ENCODE measurements at regions of chr2 and their contacts with region 1.

Region 1: DNA sequence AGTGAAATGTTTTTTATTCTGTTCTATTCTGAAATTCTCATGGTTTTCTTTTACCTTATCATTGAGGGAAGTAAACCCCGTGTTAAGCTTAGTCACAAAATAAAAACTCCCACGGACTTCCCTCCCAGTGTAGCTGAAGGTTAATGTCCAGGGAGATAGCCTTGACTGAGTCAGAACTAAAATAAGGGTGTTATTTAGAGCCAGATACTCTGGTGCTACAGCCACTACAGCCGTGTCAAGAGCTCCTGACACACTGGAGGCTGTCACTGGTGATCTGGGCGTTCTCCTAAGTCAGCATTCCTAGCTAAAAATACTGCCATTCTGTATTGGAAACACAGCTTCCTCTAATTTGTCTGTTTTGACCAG is 82.0 kb upstream of the RANBP2 start:
- DNase-seq: no peak
- H3K4me3 ChIP-seq: no peak overlapping the region
- H3K4me3 Mint-ChIP-seq: no peak overlapping the region
- H3K27ac ChIP-seq: no peak overlapping the region
- H3K27ac Mint-ChIP-seq: peak overlapping the region in 1 of 8 donors; percentile 47
- H3K4me1 ChIP-seq: peaks cover 9% of the 10 kb centered on the region
- H3K4me1 Mint-ChIP-seq: peaks cover 33 to 68% (median 58%) of the 10 kb centered on the region in 3 donors
- H3K27me3 ChIP-seq: no peaks in the 10 kb centered on the region
- H3K27me3 Mint-ChIP-seq: peaks cover 0 to 2% of the 10 kb centered on the region in 2 donors

Region 2: GRCh38 chr2:108583903-108584520 is 53.3 kb before region 1 on chr2:
- CTCF ChIA-PET with region 1: interaction called, 10 read pairs
- POLR2A ChIA-PET with region 1: no interaction called
- DNase-seq: peak; percentile 24 to 65 (median 32)
- H3K4me3 ChIP-seq: no peak overlapping the region
- H3K4me3 Mint-ChIP-seq: no peak overlapping the region
- H3K27ac ChIP-seq: no peak overlapping the region
- H3K27ac Mint-ChIP-seq: peak overlapping the region in 3 of 8 donors; percentile 43 to 66 (median 52)
- H3K4me1 ChIP-seq: no peaks in the 10 kb centered on the region
- H3K4me1 Mint-ChIP-seq: peaks cover 18 to 33% (median 21%) of the 10 kb centered on the region in 3 donors
- H3K27me3 ChIP-seq: no peaks in the 10 kb centered on the region
- H3K27me3 Mint-ChIP-seq: peaks cover 0 to 1% of the 10 kb centered on the region in 2 donors

Region 3: GRCh38 chr2:108594132-108594981 is 42.9 kb before region 1 on chr2:
- CTCF ChIA-PET with region 1: interaction called, 15 read pairs
- POLR2A ChIA-PET with region 1: no interaction called
- DNase-seq: no peak
- H3K4me3 ChIP-seq: no peak overlapping the region
- H3K4me3 Mint-ChIP-seq: no peak overlapping the region
- H3K27ac ChIP-seq: peak overlapping the region; percentile 25
- H3K27ac Mint-ChIP-seq: peak overlapping the region in 4 of 8 donors; percentile 18 to 62 (median 36)
- H3K4me1 ChIP-seq: peaks cover 12% of the 10 kb centered on the region
- H3K4me1 Mint-ChIP-seq: peaks cover 17 to 24% (median 22%) of the 10 kb centered on the region in 3 donors
- H3K27me3 ChIP-seq: no peaks in the 10 kb centered on the region
- H3K27me3 Mint-ChIP-seq: no peaks in the 10 kb centered on the region

Region 4: GRCh38 chr2:108607706-108608301 is 29.5 kb before region 1 on chr2:
- CTCF ChIA-PET with region 1: interaction called, 164 read pairs
- POLR2A ChIA-PET with region 1: interaction called, 3 read pairs
- DNase-seq: peak in 3 of 5 donors; percentile 26 to 74 (median 38)
- H3K4me3 ChIP-seq: no peak overlapping the region
- H3K4me3 Mint-ChIP-seq: no peak overlapping the region
- H3K27ac ChIP-seq: no peak overlapping the region
- H3K27ac Mint-ChIP-seq: no peak overlapping the region
- H3K4me1 ChIP-seq: peaks cover 23% of the 10 kb centered on the region
- H3K4me1 Mint-ChIP-seq: peaks cover 51 to 54% (median 54%) of the 10 kb centered on the region in 3 donors
- H3K27me3 ChIP-seq: no peaks in the 10 kb centered on the region
- H3K27me3 Mint-ChIP-seq: no peaks in the 10 kb centered on the region

Region 5: GRCh38 chr2:108621087-108621559 is 16.2 kb before region 1 on chr2:
- CTCF ChIA-PET with region 1: interaction called, 164 read pairs
- POLR2A ChIA-PET with region 1: interaction called, 5 read pairs
- DNase-seq: peak; percentile 40 to 88 (median 72)
- H3K4me3 ChIP-seq: peak overlapping the region; percentile 35
- H3K4me3 Mint-ChIP-seq: peak overlapping the region; percentile 88 to 91 (median 89)
- H3K27ac ChIP-seq: peak overlapping the region; percentile 41
- H3K27ac Mint-ChIP-seq: peak overlapping the region; percentile 85 to 97 (median 94)
- H3K4me1 ChIP-seq: peaks cover 73% of the 10 kb centered on the region
- H3K4me1 Mint-ChIP-seq: peaks cover 74 to 94% (median 83%) of the 10 kb centered on the region in 3 donors
- H3K27me3 ChIP-seq: no peaks in the 10 kb centered on the region
- H3K27me3 Mint-ChIP-seq: no peaks in the 10 kb centered on the region